ENCODE measurements at regions of chr11 and their contacts with region 1.

Region 1: GRCh38 chr11:124800226-124800929 is at the start of gene MSANTD2:
- H3K4me3 Mint-ChIP-seq: peak within 1 kb of the TSS; percentile 93
- H3K27ac Mint-ChIP-seq: peak within 1 kb of the TSS; percentile 94
- H3K4me1 Mint-ChIP-seq: peaks cover 16% of the 10 kb centered on the region
- H3K27me3 Mint-ChIP-seq: peaks cover 28% of the 10 kb centered on the region

Region 2: GRCh38 chr11:124763156-124763947 is 37.0 kb before region 1 on chr11:
- intact Hi-C with region 1: loop called (anchors 5 kb)
- H3K4me3 Mint-ChIP-seq: peak overlapping the region; percentile 96
- H3K27ac Mint-ChIP-seq: peak overlapping the region; percentile 42
- H3K4me1 Mint-ChIP-seq: peaks cover 45% of the 10 kb centered on the region
- H3K27me3 Mint-ChIP-seq: peaks cover 45% of the 10 kb centered on the region